B cell (primary cell): ENCODE measurements at regions of chr17 and their contacts with region 1.

Region 1: GRCh38 chr17:57995076-57995956 is 7.3 kb upstream of the VEZF1 start:
- DNase-seq: peak; percentile 71
- ATAC-seq: peak; percentile 87
- H3K4me3 ChIP-seq: no peak overlapping the region
- H3K4me3 Mint-ChIP-seq: no peak overlapping the region
- H3K27ac ChIP-seq: peak overlapping the region in 1 of 2 donors; percentile 47
- H3K27ac Mint-ChIP-seq: peak overlapping the region; percentile 4
- H3K4me1 ChIP-seq: peaks cover 20 to 25% of the 10 kb centered on the region in 2 donors
- H3K4me1 Mint-ChIP-seq: peaks cover 35% of the 10 kb centered on the region
- H3K27me3 ChIP-seq: no peaks in the 10 kb centered on the region
- H3K27me3 Mint-ChIP-seq: no peaks in the 10 kb centered on the region
- CTCF ChIP-seq: peak; percentile 76

Region 2: DNA sequence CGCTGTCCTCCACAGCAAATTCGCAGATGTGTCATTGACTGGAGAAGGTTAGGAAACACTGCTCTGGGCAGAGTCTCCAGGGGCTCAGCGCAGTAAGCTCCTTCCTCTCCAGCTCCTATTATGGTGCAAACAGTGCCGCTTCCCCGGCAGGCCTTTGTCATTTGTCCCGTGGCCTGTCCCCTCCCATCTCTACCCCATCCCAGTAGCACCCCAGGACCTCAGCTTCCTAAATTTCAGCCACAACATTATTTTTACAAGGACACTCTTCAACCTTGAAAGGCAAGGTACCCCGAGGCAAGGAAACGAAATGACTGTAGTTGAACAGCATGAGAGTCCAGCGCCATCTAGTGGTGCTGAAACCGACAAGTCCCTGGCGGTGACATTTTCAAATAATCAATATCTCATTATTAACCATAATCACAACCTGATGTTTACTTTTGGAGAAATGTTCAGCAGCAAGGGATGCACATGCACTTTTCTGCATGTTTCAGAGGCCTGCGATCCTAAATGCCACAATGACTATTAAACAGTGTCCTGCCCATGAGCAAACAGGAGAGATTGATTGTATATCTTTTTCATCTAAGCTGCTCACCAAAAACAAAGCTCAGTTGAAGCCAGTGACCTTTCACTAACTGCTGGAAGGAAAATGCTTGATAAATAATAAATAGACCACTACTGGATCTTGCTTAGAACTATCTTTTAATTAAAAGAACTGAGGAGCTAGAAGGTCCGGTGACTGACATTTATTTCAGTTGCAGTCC is 162.0 kb before region 1 on chr17:
- CTCF ChIA-PET with region 1: interaction called, 28 read pairs
- POLR2A ChIA-PET with region 1: no interaction called
- intact Hi-C with region 1: no loop called
- DNase-seq: peak; percentile 81
- ATAC-seq: peak; percentile 62
- H3K4me3 ChIP-seq: peak overlapping the region; percentile 36 to 83 (median 58)
- H3K4me3 Mint-ChIP-seq: no peak overlapping the region
- H3K27ac ChIP-seq: no peak overlapping the region
- H3K27ac Mint-ChIP-seq: no peak overlapping the region
- H3K4me1 ChIP-seq: peaks cover 8 to 12% of the 10 kb centered on the region in 2 donors
- H3K4me1 Mint-ChIP-seq: peaks cover 2% of the 10 kb centered on the region
- H3K27me3 ChIP-seq: no peaks in the 10 kb centered on the region
- H3K27me3 Mint-ChIP-seq: no peaks in the 10 kb centered on the region
- CTCF ChIP-seq: peak; percentile 96

Region 3: GRCh38 chr17:57861000-57861789 is 134.1 kb before region 1 on chr17:
- CTCF ChIA-PET with region 1: interaction called, 468 read pairs
- POLR2A ChIA-PET with region 1: interaction called, 3 read pairs
- intact Hi-C with region 1: loop called (anchors 1 kb)
- DNase-seq: peak; percentile 62
- ATAC-seq: peak; percentile 60
- H3K4me3 ChIP-seq: peak overlapping the region; percentile 3 to 59 (median 39)
- H3K4me3 Mint-ChIP-seq: peak overlapping the region; percentile 90
- H3K27ac ChIP-seq: no peak overlapping the region
- H3K27ac Mint-ChIP-seq: peak overlapping the region; percentile 11
- H3K4me1 ChIP-seq: peaks cover 17 to 20% of the 10 kb centered on the region in 2 donors
- H3K4me1 Mint-ChIP-seq: peaks cover 16% of the 10 kb centered on the region
- H3K27me3 ChIP-seq: peaks cover 0 to 51% (median 19%) of the 10 kb centered on the region in 4 experiments
- H3K27me3 Mint-ChIP-seq: peaks cover 23% of the 10 kb centered on the region
- CTCF ChIP-seq: no peak

Region 4: DNA sequence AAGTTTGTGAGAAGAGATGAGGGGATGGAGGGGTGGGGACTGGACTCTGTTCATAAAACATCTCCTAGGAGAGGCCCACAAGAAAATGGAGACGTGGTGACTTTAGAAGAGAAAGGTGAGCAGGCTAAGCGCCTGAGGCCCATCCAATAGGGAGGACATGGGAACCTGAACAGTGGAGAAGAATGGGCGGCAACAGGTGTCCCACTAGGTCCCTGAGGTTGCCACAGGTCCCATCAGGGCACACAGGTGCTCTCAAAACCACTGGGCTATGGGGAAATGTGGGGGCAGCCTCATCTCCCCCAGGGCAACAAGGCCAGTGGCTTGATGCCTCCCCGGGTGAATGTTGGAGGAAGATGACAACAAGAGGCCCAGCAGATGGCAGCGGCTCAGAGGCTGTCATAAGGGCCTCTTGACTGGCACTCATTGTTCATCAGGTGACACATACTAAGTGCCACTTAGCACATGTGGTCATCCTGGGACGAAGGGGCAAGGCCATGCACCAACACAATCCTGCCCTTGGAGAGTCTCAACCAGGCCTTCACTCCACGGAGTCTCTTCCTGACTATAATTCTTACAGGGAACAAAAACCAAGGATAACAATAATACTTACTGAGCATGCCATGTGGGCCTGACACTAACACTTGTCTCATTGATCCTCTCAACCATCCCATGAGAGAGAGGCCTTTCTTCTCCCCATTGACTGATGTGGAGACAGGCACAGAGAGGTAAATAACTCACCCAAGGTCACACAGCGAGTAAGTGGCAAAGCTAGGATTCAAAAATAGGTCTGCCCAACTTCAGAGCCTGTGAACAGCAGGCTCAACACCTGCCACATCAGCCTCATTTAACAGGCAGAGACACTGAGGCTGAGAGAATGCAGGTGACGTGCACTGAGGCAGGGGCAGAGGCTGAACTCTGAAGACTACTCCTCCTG is 78.1 kb before region 1 on chr17:
- CTCF ChIA-PET with region 1: interaction called, 40 read pairs
- POLR2A ChIA-PET with region 1: interaction called, 3 read pairs
- intact Hi-C with region 1: loop called (anchors 1 kb)
- DNase-seq: peak; percentile 61
- ATAC-seq: peak; percentile 71
- H3K4me3 ChIP-seq: no peak overlapping the region
- H3K4me3 Mint-ChIP-seq: no peak overlapping the region
- H3K27ac ChIP-seq: no peak overlapping the region
- H3K27ac Mint-ChIP-seq: no peak overlapping the region
- H3K4me1 ChIP-seq: no peaks in the 10 kb centered on the region
- H3K4me1 Mint-ChIP-seq: no peaks in the 10 kb centered on the region
- H3K27me3 ChIP-seq: peaks cover 0 to 24% (median 13%) of the 10 kb centered on the region in 4 experiments
- H3K27me3 Mint-ChIP-seq: peaks cover 32% of the 10 kb centered on the region
- CTCF ChIP-seq: peak; percentile 37

Region 5: DNA sequence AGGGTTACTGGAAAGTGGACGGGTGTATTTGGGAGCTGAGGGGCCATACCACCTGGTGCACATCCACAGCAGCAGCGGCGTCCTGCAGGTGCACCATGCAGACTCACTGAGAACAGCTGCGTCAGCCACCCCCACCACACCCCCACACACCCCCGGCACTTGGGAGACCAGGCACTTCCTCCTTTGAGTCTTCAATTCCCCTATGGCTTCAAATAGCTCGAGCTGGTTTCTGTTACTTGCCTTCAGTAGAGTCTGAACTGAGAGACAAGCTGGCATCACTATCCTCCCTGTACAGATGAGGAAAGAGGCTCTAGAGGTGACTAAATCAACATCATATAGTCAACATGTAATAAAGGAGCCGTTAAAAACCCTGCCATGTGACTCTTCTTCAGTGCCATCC is 55.5 kb before region 1 on chr17:
- CTCF ChIA-PET with region 1: interaction called, 18 read pairs
- POLR2A ChIA-PET with region 1: interaction called, 6 read pairs
- intact Hi-C with region 1: no loop called
- DNase-seq: peak; percentile 91
- ATAC-seq: peak; percentile 94
- H3K4me3 ChIP-seq: peak overlapping the region in 1 of 5 experiments; percentile 15
- H3K4me3 Mint-ChIP-seq: peak overlapping the region; percentile 67
- H3K27ac ChIP-seq: no peak overlapping the region
- H3K27ac Mint-ChIP-seq: peak overlapping the region; percentile 63
- H3K4me1 ChIP-seq: peaks cover 26 to 33% of the 10 kb centered on the region in 2 donors
- H3K4me1 Mint-ChIP-seq: peaks cover 32% of the 10 kb centered on the region
- H3K27me3 ChIP-seq: peaks cover 0 to 71% (median 36%) of the 10 kb centered on the region in 4 experiments
- H3K27me3 Mint-ChIP-seq: peaks cover 49% of the 10 kb centered on the region
- CTCF ChIP-seq: no peak

Region 6: GRCh38 chr17:57982452-57983170 is 12.7 kb before region 1 on chr17:
- CTCF ChIA-PET with region 1: interaction called, 32 read pairs
- POLR2A ChIA-PET with region 1: interaction called, 5 read pairs
- intact Hi-C with region 1: no loop called
- DNase-seq: no peak
- ATAC-seq: no peak
- H3K4me3 ChIP-seq: no peak overlapping the region
- H3K4me3 Mint-ChIP-seq: no peak overlapping the region
- H3K27ac ChIP-seq: no peak overlapping the region
- H3K27ac Mint-ChIP-seq: no peak overlapping the region
- H3K4me1 ChIP-seq: peaks cover 22 to 34% of the 10 kb centered on the region in 2 donors
- H3K4me1 Mint-ChIP-seq: peaks cover 54% of the 10 kb centered on the region
- H3K27me3 ChIP-seq: no peaks in the 10 kb centered on the region
- H3K27me3 Mint-ChIP-seq: no peaks in the 10 kb centered on the region
- CTCF ChIP-seq: no peak

Region 7: DNA sequence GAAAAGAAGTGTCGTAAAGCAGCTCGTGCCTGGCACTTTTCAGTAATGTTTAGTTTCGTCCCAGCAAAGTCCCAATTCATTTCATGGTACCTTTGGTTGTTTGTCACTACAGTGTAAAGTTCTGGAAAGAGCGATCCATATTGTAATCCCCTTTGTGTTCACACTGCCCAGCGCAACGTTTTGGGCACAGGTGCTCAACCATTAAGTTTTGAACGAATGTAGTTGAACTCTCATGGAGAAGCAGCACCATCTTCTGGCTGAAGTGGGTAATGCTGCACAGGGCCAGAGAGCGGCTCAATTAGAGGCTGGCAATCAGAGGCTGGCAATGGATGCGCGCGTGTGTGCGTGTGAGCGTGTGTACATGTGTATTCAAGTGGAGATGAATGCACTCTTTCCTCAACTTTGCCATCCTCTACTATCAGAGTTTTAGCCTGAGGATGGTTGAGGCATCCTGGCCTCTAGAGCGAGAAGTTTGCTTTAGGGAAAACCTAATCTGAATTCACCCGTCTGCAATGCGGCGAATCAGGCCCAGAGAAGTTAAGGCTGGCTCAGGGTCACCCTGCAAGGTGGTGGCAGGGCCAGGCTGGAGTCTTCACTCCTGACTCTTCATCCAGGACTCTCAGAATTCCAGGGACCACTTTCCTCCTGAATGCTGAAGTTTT is 117.8 kb after region 1 on chr17:
- CTCF ChIA-PET with region 1: interaction called, 37 read pairs
- POLR2A ChIA-PET with region 1: no interaction called
- intact Hi-C with region 1: loop called (anchors 2 kb)
- DNase-seq: peak; percentile 83
- ATAC-seq: peak; percentile 94
- H3K4me3 ChIP-seq: no peak overlapping the region
- H3K4me3 Mint-ChIP-seq: no peak overlapping the region
- H3K27ac ChIP-seq: no peak overlapping the region
- H3K27ac Mint-ChIP-seq: peak overlapping the region; percentile 5
- H3K4me1 ChIP-seq: no peaks in the 10 kb centered on the region
- H3K4me1 Mint-ChIP-seq: no peaks in the 10 kb centered on the region
- H3K27me3 ChIP-seq: peaks cover 0 to 16% (median 6%) of the 10 kb centered on the region in 4 experiments
- H3K27me3 Mint-ChIP-seq: peaks cover 51% of the 10 kb centered on the region
- CTCF ChIP-seq: peak; percentile 95

Region 8: GRCh38 chr17:58172369-58173071 is 177.2 kb after region 1 on chr17:
- CTCF ChIA-PET with region 1: no interaction called
- POLR2A ChIA-PET with region 1: no interaction called
- intact Hi-C with region 1: no loop called
- DNase-seq: peak; percentile 37
- ATAC-seq: no peak
- H3K4me3 ChIP-seq: no peak overlapping the region
- H3K4me3 Mint-ChIP-seq: no peak overlapping the region
- H3K27ac ChIP-seq: no peak overlapping the region
- H3K27ac Mint-ChIP-seq: no peak overlapping the region
- H3K4me1 ChIP-seq: peaks cover 0 to 3% of the 10 kb centered on the region in 2 donors
- H3K4me1 Mint-ChIP-seq: peaks cover 3% of the 10 kb centered on the region
- H3K27me3 ChIP-seq: peaks cover 0 to 17% (median 5%) of the 10 kb centered on the region in 4 experiments
- H3K27me3 Mint-ChIP-seq: peaks cover 41% of the 10 kb centered on the region
- CTCF ChIP-seq: peak; percentile 31